T-cell (primary cell): ENCODE measurements at regions of chr12 and their contacts with region 1.

Region 1: GRCh38 chr12:117119592-117120198 is 20.5 kb upstream of the TESC start:
- DNase-seq: peak in 11 of 35 experiments; percentile 8 to 59 (median 14)
- ATAC-seq: peak in 3 of 4 experiments; percentile 40 to 56 (median 45)
- H3K4me3 ChIP-seq: no peak overlapping the region
- H3K4me3 Mint-ChIP-seq: no peak overlapping the region
- H3K27ac ChIP-seq: no peak overlapping the region
- H3K27ac Mint-ChIP-seq: no peak overlapping the region
- H3K4me1 ChIP-seq: peaks cover 0 to 5% of the 10 kb centered on the region in 2 experiments
- H3K4me1 Mint-ChIP-seq: no peaks in the 10 kb centered on the region
- H3K27me3 ChIP-seq: peaks cover 0 to 9% of the 10 kb centered on the region in 2 experiments
- H3K27me3 Mint-ChIP-seq: no peaks in the 10 kb centered on the region

Region 2: GRCh38 chr12:117025481-117026151 is 94.1 kb before region 1 on chr12:
- CTCF ChIA-PET with region 1: interaction called, 6 to 17 read pairs
- POLR2A ChIA-PET with region 1: no interaction called
- DNase-seq: peak in 29 of 35 experiments; percentile 4 to 64 (median 26)
- ATAC-seq: peak; percentile 52 to 72 (median 67)
- H3K4me3 ChIP-seq: no peak overlapping the region
- H3K4me3 Mint-ChIP-seq: no peak overlapping the region
- H3K27ac ChIP-seq: no peak overlapping the region
- H3K27ac Mint-ChIP-seq: no peak overlapping the region
- H3K4me1 ChIP-seq: peaks cover 4 to 7% of the 10 kb centered on the region in 2 experiments
- H3K4me1 Mint-ChIP-seq: peaks cover 0 to 9% (median 3%) of the 10 kb centered on the region in 3 donors
- H3K27me3 ChIP-seq: no peaks in the 10 kb centered on the region
- H3K27me3 Mint-ChIP-seq: no peaks in the 10 kb centered on the region

Region 3: GRCh38 chr12:117035287-117035686 is 84.4 kb before region 1 on chr12:
- CTCF ChIA-PET with region 1: interaction called in 1 of 2 experiments, 12 read pairs
- POLR2A ChIA-PET with region 1: no interaction called
- DNase-seq: no peak
- ATAC-seq: no peak
- H3K4me3 ChIP-seq: no peak overlapping the region
- H3K4me3 Mint-ChIP-seq: no peak overlapping the region
- H3K27ac ChIP-seq: no peak overlapping the region
- H3K27ac Mint-ChIP-seq: no peak overlapping the region
- H3K4me1 ChIP-seq: peaks cover 0 to 3% of the 10 kb centered on the region in 2 experiments
- H3K4me1 Mint-ChIP-seq: peaks cover 0 to 5% (median 2%) of the 10 kb centered on the region in 3 donors
- H3K27me3 ChIP-seq: peaks cover 0 to 30% of the 10 kb centered on the region in 2 experiments
- H3K27me3 Mint-ChIP-seq: peaks cover 7% of the 10 kb centered on the region in 2 donors